Lower leg skin (tissue), 4 donors: ENCODE measurements at regions of chr10 and their contacts with region 1.

Region 1: GRCh38 chr10:124530215-124530665 is 68.6 kb downstream of the LHPP start:
- DNase-seq: peak; percentile 84 to 97
- H3K4me3 ChIP-seq: no peak overlapping the region
- CTCF ChIP-seq: peak in 1 of 3 donors; percentile 76
- POLR2A ChIP-seq: no peak

Region 2: GRCh38 chr10:124827474-124827873 is 297.2 kb after region 1 on chr10:
- intact Hi-C with region 1: loop called (anchors 10 kb)
- DNase-seq: no peak
- H3K4me3 ChIP-seq: no peak overlapping the region
- CTCF ChIP-seq: no peak
- POLR2A ChIP-seq: no peak